Uterus (tissue), 4 donors: ENCODE measurements at regions of chr3 and their contacts with region 1.

Region 1: GRCh38 chr3:50542177-50543034 is 25.1 kb downstream of the C3orf18 start:
- DNase-seq: peak; percentile 66 to 72
- H3K4me3 ChIP-seq: no peak overlapping the region
- H3K27ac ChIP-seq: no peak overlapping the region
- H3K4me1 ChIP-seq: no peaks in the 10 kb centered on the region
- H3K27me3 ChIP-seq: no peaks in the 10 kb centered on the region
- CTCF ChIP-seq: peak; percentile 80 to 88 (median 86)
- POLR2A ChIP-seq: no peak

Region 2: DNA sequence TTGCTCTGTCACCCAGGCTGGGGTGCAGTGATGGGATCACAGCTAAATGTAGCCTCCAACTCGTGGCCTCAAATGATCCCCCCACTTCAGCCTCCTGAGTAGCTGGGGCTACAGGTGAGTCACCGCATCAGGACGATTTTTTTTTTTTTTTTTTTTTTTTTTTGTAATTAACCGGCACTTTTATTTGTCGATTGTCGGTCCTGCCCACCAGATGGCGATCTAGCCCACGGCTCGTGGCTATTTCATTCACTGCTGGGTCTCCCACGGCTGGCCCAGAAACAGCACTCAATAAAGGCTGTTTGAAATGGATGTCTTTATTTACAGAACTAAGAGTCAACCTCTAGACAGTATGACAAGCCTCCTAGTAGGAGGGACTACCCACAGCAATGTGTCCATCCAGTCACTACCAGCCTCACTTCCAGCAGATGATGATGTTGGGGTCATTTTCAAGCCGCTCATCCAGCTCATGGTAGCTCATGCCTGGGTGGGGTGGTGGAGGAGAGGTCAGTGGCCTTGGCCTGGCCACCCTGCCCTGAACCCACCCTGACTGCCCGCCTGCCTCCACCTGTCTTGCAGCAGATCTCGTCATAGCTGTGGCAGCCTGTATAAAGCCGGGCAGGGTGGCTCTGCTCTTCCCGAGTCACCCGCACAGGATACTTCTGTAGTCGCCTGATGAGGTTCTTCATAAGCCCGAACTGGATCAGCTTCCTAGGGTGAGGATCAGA is 195.1 kb before region 1 on chr3:
- intact Hi-C with region 1: loop called (anchors 2 kb)
- DNase-seq: peak; percentile 72 to 78
- H3K4me3 ChIP-seq: no peak overlapping the region
- H3K27ac ChIP-seq: no peak overlapping the region
- H3K4me1 ChIP-seq: peaks cover 0 to 27% of the 10 kb centered on the region in 2 donors
- H3K27me3 ChIP-seq: no peaks in the 10 kb centered on the region
- CTCF ChIP-seq: peak; percentile 41 to 52 (median 46)
- POLR2A ChIP-seq: no peak

Region 3: GRCh38 chr3:50370594-50370993 is 171.8 kb before region 1 on chr3:
- intact Hi-C with region 1: loop called (anchors 10 kb)
- DNase-seq: no peak
- H3K4me3 ChIP-seq: no peak overlapping the region
- H3K27ac ChIP-seq: no peak overlapping the region
- H3K4me1 ChIP-seq: no peaks in the 10 kb centered on the region
- H3K27me3 ChIP-seq: no peaks in the 10 kb centered on the region
- CTCF ChIP-seq: no peak
- POLR2A ChIP-seq: no peak